ENCODE measurements at regions of chr19 and their contacts with region 1.

Region 1: DNA sequence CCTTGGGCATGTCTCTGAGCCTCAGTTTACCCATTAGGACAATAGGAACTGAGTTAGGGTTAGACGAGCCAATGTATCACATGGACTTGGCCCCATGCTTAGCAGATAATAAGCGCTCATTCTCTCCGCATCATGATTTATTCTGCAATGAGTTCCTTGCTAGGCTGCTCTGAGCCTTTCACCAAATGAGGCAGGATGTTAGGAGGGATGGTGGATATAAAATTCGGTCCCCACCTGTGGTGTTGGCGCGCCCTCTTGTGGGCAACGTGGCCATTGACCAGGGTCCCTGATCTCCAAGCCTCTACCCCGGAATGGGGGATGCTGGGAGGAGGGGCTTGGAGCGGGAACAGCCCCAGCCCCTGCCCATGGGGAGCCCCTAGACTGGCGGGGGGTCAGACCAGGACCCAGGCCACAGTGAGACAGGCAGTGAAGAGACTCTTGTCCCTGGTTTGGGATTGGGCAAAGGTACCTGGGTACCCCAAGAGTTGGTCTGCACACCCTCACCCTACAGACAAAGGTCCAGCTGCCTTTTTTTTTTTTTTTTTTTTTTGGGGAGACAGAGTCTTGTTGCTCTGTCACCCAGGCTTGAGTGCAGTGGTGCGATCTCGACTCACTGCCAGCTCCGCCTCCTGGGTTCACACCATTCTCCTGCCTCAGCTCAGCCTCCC is 43.9 kb downstream of the CERS4 start:
- DNase-seq: peak; percentile 84 to 89
- ATAC-seq: peak; percentile 45 to 75 (median 62)
- H3K4me3 ChIP-seq: no peak overlapping the region
- H3K27ac ChIP-seq: no peak overlapping the region
- H3K4me1 ChIP-seq: peaks cover 0 to 28% (median 4%) of the 10 kb centered on the region in 9 donors
- H3K27me3 ChIP-seq: no peaks in the 10 kb centered on the region
- CTCF ChIP-seq: peak; percentile 91 to 97 (median 96)

Region 2: DNA sequence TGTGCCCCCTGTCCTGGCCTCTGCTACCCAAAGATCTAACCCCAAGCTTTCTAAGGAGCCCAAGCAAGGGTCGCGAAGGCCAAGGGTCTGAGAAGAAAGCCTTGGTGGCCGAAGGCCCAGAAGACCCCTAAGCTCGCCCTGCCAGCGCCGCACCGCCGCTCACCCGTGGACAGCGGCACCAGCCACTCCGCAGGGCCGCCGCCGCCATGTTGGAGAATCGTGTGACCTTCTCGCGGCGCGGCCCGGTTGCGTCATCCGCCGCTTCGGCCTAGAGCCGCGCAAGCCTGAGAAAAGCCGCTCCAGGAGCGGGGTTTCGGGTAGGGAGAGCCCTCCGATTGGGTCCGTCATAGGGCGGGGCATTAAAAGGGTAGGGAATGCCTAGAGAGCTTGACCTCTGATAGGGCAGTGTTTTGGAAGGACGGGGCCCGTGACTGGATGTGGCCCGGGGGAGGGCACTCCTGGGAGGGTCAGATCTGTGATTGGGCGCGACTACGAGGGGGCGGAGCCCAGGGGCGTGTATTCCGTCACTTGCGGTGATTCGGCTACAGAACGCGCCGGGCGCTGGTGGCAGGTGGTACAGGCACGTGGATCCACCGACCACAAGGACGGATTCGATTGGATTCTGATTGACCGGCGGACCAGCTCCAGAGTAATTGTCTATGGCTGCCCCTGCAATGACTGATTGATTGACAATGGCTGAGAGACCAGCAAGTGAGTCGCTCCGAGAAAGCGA is 309.4 kb before region 1 on chr19 and contains the start of gene TIMM44:
- intact Hi-C with region 1: loop called in 8 of 10 experiments (anchors 1 to 10 kb)
- DNase-seq: peak; percentile 98 to 99
- ATAC-seq: peak; percentile 98 to 99 (median 99)
- H3K4me3 ChIP-seq: peak within 1 kb of the TSS; percentile 67 to 99 (median 89)
- H3K27ac ChIP-seq: peak within 1 kb of the TSS; percentile 85 to 98 (median 96)
- H3K4me1 ChIP-seq: peaks cover 4 to 26% (median 13%) of the 10 kb centered on the region in 9 donors
- H3K27me3 ChIP-seq: no peaks in the 10 kb centered on the region
- CTCF ChIP-seq: no peak
- total RNA-seq, gene TIMM44: 54.9 to 97.5 (median 71.4) TPM

Region 3: GRCh38 chr19:7970716-7971448 is 282.2 kb before region 1 on chr19:
- intact Hi-C with region 1: loop called in 2 of 10 experiments (anchors 5 kb)
- DNase-seq: no peak
- ATAC-seq: no peak
- H3K4me3 ChIP-seq: no peak overlapping the region
- H3K27ac ChIP-seq: no peak overlapping the region
- H3K4me1 ChIP-seq: peaks cover 0 to 26% (median 12%) of the 10 kb centered on the region in 9 donors
- H3K27me3 ChIP-seq: no peaks in the 10 kb centered on the region
- CTCF ChIP-seq: peak; percentile 53 to 78 (median 73)

Region 4: DNA sequence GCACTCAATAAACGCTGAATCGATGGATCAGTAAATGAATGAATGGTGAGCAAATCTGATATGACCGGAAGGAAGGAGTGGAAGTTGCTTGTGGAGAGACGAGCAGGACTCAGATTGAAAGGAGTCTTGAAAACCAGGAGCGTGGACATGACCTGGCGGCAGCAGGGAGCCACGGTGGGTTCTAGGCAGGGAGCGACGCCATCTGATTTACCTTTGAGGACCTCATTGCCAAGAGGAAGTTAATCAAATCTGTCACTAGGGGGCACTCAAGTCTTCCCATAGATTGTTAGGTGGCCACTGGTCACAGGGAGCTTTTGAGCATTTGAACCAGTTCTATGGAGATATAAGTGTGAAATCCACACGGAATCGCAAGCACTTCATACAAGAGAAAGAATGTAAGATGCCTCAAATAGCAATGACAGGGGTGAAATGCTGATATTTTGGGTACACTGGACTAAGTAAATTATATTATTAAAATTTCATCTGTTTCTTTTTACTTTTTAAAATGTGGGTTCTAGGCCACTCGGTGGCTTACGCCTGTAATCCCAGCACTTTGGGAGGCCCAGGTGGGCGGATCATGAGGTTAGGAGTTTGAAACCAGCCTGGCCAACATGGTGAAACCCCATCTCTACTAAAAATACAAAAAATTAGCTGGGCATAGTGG is 94.5 kb before region 1 on chr19:
- intact Hi-C with region 1: loop called (anchors 1 to 2 kb)
- DNase-seq: peak in 1 of 2 donors; percentile 72
- ATAC-seq: peak in 7 of 8 donors; percentile 46 to 73 (median 65)
- H3K4me3 ChIP-seq: no peak overlapping the region
- H3K27ac ChIP-seq: no peak overlapping the region
- H3K4me1 ChIP-seq: peaks cover 0 to 15% (median 10%) of the 10 kb centered on the region in 9 donors
- H3K27me3 ChIP-seq: no peaks in the 10 kb centered on the region
- CTCF ChIP-seq: peak; percentile 50 to 84 (median 76)

Measured in heart right ventricle (tissue), 16 donors.